ENCODE measurements at regions of chr4 and their contacts with region 1.

Region 1: DNA sequence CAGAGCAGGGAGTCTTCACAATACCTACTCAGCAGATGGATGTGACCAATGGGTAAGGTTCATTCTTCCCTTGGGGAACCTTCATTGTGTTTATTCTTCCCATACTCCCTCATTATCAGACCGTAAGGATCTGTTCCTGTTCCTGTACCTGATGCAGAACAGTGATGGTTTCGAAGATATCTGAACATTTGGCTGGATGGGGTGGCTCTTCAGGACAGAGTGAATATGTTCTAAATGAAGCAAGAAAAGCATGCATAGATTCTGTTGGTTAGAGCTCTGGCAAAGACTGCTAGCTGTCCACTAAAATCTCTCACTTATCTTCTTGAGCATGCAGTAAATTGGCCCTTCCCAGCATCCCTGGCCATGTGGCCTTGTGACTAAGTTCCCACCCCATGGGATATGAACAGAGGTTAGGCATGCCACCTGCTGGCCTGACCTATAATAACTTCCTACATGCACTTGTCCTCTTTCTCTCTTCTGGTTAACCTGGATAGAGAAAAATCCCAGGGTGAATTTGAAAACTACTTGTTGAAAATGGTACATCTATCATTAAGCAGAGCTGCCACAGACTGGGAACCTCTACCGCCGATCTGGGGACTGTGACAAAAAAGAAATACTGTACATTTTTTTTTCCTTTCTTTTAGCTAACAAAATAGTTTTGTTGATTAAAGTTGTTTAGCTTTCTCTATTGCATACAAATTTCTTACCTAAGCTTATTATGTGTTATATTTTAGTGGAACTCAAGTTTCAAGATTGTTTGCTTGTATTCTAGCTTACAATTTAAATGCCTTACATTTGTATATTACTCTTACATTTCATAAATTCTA is 60.0 kb upstream of the BANK1 start:
- DNase-seq: peak; percentile 44 to 62 (median 54)
- ATAC-seq: peak in 3 of 4 donors; percentile 89 to 93 (median 92)
- H3K4me3 ChIP-seq: no peak overlapping the region
- H3K27ac ChIP-seq: no peak overlapping the region
- H3K4me1 ChIP-seq: no peaks in the 10 kb centered on the region
- H3K27me3 ChIP-seq: no peaks in the 10 kb centered on the region
- CTCF ChIP-seq: peak; percentile 54 to 81 (median 72)
- POLR2A ChIP-seq: no peak

Region 2: DNA sequence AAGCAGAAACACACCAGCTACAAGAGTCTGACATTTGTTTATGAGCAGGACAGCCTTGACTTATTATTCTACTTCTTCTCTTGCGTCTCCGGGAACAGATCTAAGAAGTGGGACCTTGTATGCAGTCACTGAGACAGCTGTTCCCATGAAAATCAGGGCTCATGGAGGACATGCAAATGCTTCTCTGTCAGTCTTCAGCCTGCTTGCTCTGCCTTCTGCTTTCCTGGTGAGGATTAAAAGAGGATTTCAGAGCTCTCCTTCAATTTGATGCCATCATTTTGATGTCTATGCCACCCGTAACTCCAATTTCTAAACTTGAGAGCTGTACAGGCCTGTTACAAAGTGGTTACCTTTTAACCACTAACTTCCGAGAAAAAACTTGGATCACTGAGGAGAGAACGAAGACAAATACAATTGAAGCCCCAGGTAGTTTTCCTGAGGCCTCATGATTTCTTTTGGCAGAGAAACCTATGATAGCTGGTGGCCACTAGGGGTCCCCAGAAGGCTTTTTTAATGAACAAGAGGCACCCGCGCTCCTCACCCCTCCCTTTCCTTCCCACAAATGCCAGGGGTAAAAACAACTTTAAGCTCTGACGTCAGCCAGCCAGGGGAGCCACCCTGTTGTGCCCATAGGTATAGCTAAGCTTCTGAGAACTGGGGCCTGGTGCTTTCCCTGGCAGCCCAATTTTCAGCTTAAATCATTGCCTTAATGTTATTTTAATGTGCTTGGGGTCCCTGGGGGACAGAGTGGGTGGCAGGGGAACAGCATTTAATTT is 1637.2 kb before region 1 on chr4:
- intact Hi-C with region 1: loop called in 1 of 10 experiments (anchors 5 kb)
- DNase-seq: peak; percentile 63 to 87 (median 80)
- ATAC-seq: peak; percentile 75 to 96 (median 94)
- H3K4me3 ChIP-seq: no peak overlapping the region
- H3K27ac ChIP-seq: peak overlapping the region in 7 of 12 donors; percentile 1 to 53 (median 23)
- H3K4me1 ChIP-seq: peaks cover 0 to 28% (median 11%) of the 10 kb centered on the region in 12 donors
- H3K27me3 ChIP-seq: no peaks in the 10 kb centered on the region
- CTCF ChIP-seq: peak; percentile 70 to 93 (median 83)
- POLR2A ChIP-seq: no peak

Region 3: DNA sequence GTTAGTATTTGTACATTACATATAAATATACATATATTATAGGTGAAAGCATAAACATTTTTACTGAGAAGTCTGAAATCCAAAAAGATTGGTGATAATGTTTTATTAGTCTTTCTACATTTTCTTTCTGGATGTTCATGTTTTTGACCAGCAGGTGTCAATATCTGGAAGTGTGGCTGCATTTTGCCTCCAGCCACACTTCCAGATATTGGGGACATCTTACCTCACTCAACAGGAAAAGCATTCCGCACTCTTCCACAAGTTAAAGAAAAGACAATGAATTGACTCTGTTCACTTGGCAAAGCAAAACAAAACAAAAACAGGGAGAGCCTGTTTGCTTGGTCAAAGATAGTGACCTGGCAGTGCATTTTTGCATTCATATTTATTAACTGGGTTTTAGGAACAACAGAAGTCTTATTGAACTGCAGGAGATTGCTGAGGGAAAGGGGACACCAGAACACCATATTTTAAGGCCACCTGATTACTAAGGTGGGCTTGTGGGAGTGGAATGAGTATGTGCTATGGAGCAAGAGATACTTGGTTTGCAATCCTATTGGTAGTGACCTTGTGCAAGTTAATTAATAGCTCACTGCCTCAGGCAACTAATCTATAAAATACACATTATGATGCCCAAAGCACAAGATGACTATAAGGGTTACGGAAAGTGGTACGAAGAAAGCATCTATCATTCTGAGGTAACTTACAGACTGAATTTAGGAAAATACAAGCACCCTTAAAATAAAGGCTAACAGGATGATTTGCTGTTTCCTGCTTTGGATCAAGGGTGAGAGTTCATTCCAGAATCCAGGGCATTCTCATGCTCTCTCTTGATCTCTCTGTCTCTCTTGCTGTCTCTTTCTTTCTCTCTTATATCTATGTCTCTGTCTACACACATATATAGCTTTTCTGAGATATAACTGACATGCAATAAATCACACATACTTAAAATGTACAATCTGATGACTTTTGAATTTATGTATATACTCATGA is 822.7 kb before region 1 on chr4:
- intact Hi-C with region 1: loop called in 1 of 10 experiments (anchors 10 kb)
- DNase-seq: no peak
- ATAC-seq: no peak
- H3K4me3 ChIP-seq: no peak overlapping the region
- H3K27ac ChIP-seq: no peak overlapping the region
- H3K4me1 ChIP-seq: no peaks in the 10 kb centered on the region
- H3K27me3 ChIP-seq: no peaks in the 10 kb centered on the region
- CTCF ChIP-seq: peak in 11 of 12 donors; percentile 14 to 52 (median 37)
- POLR2A ChIP-seq: no peak

Region 4: DNA sequence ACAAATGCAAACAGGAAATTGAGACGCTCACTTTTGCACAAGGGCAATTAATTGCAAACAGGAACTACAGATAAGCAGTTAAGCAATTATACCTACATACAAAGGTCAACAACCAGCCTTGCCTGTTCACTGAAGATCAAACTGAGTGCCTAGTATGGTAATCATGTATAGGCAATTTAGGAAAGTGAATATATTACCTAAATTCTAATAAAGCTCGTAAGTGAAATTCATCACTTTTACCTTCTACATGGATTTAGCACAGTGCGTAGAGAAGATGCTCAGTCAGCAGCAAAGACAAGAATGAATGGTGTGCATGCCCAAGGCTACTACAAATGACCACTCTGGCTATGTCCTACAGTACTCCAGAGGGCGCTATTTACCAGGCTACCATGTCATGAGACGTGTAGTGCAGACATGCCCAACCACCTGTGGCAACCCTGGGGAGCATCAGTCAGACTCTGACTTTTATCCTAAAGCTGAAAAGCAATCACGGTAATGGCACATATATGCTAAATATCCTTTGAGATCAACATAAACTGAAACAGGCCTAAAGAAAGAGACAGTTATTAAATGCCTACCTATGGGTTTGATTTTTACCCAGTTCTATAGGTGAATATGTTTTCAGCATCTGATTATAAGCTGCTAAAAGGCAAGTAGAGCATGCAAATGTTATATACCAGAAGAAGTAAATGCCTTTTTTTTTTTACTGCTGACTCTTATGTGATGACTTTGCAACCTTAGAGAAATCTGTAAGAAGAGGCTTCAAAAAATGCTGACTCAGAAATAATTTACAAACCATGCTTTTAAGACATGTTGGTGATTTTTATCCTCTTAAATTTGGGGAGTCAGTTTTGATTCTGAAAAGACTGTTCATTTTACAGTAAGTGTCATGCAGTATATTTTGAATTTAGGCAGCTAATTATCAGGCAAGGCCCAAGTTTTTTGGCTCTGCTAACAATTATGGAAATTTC is 561.2 kb before region 1 on chr4:
- intact Hi-C with region 1: loop called (anchors 1 to 5 kb)
- DNase-seq: peak in 4 of 5 donors; percentile 40 to 62 (median 54)
- ATAC-seq: peak; percentile 93 to 97 (median 97)
- H3K4me3 ChIP-seq: no peak overlapping the region
- H3K27ac ChIP-seq: no peak overlapping the region
- H3K4me1 ChIP-seq: peaks cover 0 to 14% (median 0%) of the 10 kb centered on the region in 12 donors
- H3K27me3 ChIP-seq: no peaks in the 10 kb centered on the region
- CTCF ChIP-seq: peak; percentile 64 to 86 (median 78)
- POLR2A ChIP-seq: no peak

Region 5: DNA sequence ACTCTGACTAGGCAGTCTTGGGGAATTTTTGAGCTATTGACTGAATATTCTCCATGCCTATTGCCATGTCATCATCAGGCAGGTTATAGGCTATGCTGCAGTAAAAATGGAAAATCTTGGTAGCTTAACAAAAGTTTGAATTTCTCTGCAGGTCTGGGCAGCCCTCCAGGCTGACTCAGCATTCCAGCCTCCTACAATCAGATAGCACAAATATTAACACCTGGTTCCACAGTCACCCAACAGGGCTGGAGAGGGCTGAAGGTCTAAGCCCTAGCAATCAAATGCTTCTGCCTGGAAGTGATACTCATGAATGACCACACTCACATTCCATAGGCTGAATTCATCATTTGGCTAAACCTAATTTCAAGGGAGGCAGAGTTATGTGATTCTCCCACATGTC is 373.6 kb before region 1 on chr4:
- intact Hi-C with region 1: loop called in 1 of 10 experiments (anchors 10 kb)
- DNase-seq: no peak
- ATAC-seq: no peak
- H3K4me3 ChIP-seq: no peak overlapping the region
- H3K27ac ChIP-seq: no peak overlapping the region
- H3K4me1 ChIP-seq: peaks cover 0 to 2% (median 0%) of the 10 kb centered on the region in 12 donors
- H3K27me3 ChIP-seq: no peaks in the 10 kb centered on the region
- CTCF ChIP-seq: no peak
- POLR2A ChIP-seq: no peak